GM12878 (cell line): ENCODE measurements at regions of chr3 and their contacts with region 1.

Region 1: DNA sequence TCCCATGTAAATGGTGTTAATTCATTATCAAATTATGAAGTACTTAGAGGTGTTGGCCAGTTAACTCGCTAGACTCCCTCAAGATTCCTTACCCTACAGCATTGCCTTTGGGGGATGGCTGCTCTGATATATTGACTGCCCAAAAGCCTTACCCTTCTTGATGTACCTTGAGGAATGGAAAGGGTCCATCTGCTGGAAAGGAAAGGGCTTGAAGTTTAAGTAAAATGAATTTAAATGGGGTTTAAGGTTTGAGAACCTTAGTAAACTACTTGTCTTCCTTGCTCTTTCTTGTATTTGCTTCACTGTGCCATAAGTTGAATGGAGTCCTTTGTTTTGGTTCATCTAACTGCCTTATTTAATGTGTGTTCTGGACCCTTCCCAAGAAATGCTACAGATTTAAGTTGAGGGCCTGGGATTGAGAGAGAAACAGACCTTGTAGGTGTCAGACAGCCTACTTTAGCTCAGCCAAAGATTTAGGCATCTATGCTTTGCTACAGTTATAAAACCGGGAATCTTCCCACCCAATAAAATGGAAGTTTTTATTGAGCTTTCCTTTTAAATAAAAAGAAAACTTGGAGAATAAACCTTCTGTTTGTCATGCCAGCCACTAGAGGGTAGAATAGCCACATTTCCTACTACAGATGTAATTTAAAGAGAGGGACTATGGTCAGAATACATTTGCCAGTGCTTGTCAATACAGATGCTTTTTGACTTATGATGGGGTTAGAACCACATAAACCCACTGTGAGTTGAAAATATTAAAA is 25.3 kb downstream of the CMSS1 start:
- DNase-seq: no peak
- ATAC-seq: peak; percentile 86
- H3K4me3 ChIP-seq: no peak overlapping the region
- H3K27ac ChIP-seq: no peak overlapping the region
- H3K4me1 ChIP-seq: peaks cover 11% of the 10 kb centered on the region; the same call in 1 of the 2 replicates
- H3K27me3 ChIP-seq: no peaks in the 10 kb centered on the region
- CTCF ChIP-seq: peak; percentile 46 to 65 (median 57); a peak in 5 of 6 replicates
- EP300 ChIP-seq: no peak
- POLR2A ChIP-seq: no peak
- RAD21 ChIP-seq: peak; percentile 89

Region 2: DNA sequence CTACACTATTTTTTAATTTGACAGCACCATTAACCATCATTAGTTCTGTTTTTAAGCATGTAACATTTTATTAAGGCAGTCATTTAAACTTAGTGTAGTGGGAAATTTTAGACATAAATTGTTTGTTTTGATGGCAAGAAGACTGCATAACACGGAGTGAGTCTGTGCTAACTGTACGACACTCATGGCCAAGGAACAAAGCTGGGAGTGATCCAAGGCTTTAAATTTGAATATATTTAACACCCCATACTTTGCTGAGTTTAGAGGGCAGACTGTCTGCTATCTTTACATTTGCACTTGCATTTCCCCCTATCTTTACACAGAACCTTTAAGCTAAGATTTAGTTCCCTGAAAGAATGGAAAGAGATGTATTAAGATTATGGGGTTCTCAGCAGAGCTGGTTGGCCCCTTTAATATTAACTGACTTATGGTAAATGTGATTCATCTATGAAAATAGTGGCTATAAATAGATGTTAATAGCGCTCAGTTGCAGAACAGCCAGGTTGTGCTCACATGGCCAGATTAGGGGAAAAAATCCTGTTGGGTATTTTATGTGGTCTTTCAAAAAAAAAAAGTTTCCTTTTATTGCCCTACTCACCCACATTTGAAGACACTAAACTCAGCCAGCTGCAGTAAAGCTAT is 95.4 kb after region 1 on chr3:
- CTCF ChIA-PET with region 1: no interaction called
- POLR2A ChIA-PET with region 1: no interaction called
- RAD21 ChIA-PET with region 1: interaction called, 14 read pairs
- SMC1A ChIA-PET with region 1: interaction called, 9 read pairs
- in situ Hi-C with region 1: no loop called
- intact Hi-C with region 1: loop called (anchors 5 kb)
- DNase-seq: no peak
- ATAC-seq: peak; percentile 56
- H3K4me3 ChIP-seq: 0 out of 2 replicates have a peak overlapping the region, but pooled peaks have one; percentile 15
- H3K27ac ChIP-seq: 0 out of 2 replicates have a peak overlapping the region, but pooled peaks have one; percentile 58
- H3K4me1 ChIP-seq: peaks cover 24% of the 10 kb centered on the region
- H3K27me3 ChIP-seq: no peaks in the 10 kb centered on the region
- CTCF ChIP-seq: no peak
- EP300 ChIP-seq: no peak
- POLR2A ChIP-seq: no peak
- RAD21 ChIP-seq: no peak

Region 3: DNA sequence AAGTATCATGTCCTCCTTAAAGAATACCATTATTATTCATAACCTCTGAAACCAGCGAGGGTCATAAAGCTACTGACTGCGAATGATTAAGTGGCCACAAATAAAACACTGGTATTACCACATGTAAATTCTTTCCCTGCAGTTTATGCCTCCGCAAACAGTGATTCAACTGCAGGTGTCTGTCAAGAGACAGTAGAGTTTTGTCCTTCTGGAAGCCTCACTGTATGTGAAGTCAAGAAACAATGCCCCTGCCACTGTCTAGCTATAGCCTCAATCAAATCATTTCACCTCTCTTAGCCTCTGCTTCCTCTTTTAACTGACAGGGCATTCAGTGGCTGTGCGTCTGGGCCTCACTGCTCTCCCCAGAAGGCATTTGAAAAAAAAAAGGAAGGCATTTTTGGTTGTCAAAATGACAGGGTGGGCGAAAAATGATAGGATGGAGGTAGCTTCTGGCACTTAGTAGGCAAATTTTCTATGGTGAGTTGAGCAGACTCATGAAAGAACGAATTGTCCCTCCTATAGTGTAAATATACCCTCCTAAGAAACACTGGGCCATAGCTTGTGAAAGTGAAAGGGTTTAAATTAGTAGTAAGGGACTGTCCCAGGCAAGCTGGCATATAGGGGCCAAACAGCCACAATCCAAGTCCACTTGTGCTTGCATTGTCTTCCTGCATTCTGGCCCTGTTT is 204.6 kb after region 1 on chr3:
- CTCF ChIA-PET with region 1: interaction called, 13 read pairs
- POLR2A ChIA-PET with region 1: no interaction called
- RAD21 ChIA-PET with region 1: interaction called, 5 read pairs
- SMC1A ChIA-PET with region 1: interaction called, 15 read pairs
- in situ Hi-C with region 1: no loop called
- intact Hi-C with region 1: loop called (anchors 5 kb)
- DNase-seq: peak; percentile 77
- ATAC-seq: peak; percentile 93
- H3K4me3 ChIP-seq: peak overlapping the region; percentile 53
- H3K27ac ChIP-seq: peak overlapping the region; percentile 21; the same call in 1 of the 2 replicates
- H3K4me1 ChIP-seq: peaks cover 43% of the 10 kb centered on the region
- H3K27me3 ChIP-seq: no peaks in the 10 kb centered on the region
- CTCF ChIP-seq: no peak
- EP300 ChIP-seq: peak; percentile 41 to 73
- POLR2A ChIP-seq: no peak
- RAD21 ChIP-seq: no peak

Region 4: DNA sequence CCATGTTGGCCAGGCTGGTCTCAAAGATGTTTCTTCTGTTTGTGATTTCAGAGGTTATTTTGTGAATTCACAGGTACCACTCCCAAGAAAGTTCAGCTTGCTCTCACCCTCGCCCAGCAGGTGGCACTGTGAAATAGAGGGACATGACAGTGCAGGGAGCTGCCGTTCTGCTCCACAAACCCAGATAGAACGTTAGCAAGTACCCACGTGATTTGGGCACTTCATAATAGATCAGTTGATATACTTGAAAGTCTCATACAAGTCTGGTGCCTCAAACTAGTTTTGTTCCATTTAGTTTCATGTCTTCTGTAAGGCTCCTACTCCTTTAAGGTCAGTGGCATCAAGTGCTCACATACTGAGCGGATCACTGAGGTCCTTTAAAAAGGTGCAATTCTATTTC is 225.8 kb after region 1 on chr3:
- CTCF ChIA-PET with region 1: interaction called, 42 read pairs
- POLR2A ChIA-PET with region 1: no interaction called
- RAD21 ChIA-PET with region 1: interaction called, 16 read pairs
- SMC1A ChIA-PET with region 1: interaction called, 11 read pairs
- in situ Hi-C with region 1: loop called (anchors 5 kb)
- intact Hi-C with region 1: loop called (anchors 5 kb)
- DNase-seq: peak; percentile 33
- ATAC-seq: peak; percentile 96
- H3K4me3 ChIP-seq: no peak overlapping the region
- H3K27ac ChIP-seq: no peak overlapping the region
- H3K4me1 ChIP-seq: peaks cover 16% of the 10 kb centered on the region
- H3K27me3 ChIP-seq: no peaks in the 10 kb centered on the region
- CTCF ChIP-seq: peak; percentile 74 to 79 (median 79)
- EP300 ChIP-seq: no peak
- POLR2A ChIP-seq: no peak
- RAD21 ChIP-seq: peak; percentile 92

Region 5: GRCh38 chr3:100089812-100090668 is 247.0 kb after region 1 on chr3:
- CTCF ChIA-PET with region 1: interaction called, 17 read pairs
- POLR2A ChIA-PET with region 1: no interaction called
- RAD21 ChIA-PET with region 1: interaction called, 12 read pairs
- SMC1A ChIA-PET with region 1: interaction called, 8 read pairs
- in situ Hi-C with region 1: no loop called
- intact Hi-C with region 1: no loop called
- DNase-seq: no peak
- ATAC-seq: peak; percentile 90
- H3K4me3 ChIP-seq: no peak overlapping the region
- H3K27ac ChIP-seq: no peak overlapping the region
- H3K4me1 ChIP-seq: peaks cover 18% of the 10 kb centered on the region
- H3K27me3 ChIP-seq: no peaks in the 10 kb centered on the region
- CTCF ChIP-seq: peak; percentile 32 to 73 (median 72)
- EP300 ChIP-seq: no peak
- POLR2A ChIP-seq: no peak
- RAD21 ChIP-seq: peak; percentile 67

Region 6: GRCh38 chr3:100254168-100254777 is 411.3 kb after region 1 on chr3:
- CTCF ChIA-PET with region 1: interaction called, 80 read pairs
- POLR2A ChIA-PET with region 1: no interaction called
- RAD21 ChIA-PET with region 1: interaction called, 62 read pairs
- SMC1A ChIA-PET with region 1: interaction called, 46 read pairs
- in situ Hi-C with region 1: loop called (anchors 5 kb)
- intact Hi-C with region 1: loop called (anchors 1 kb)
- DNase-seq: no peak
- ATAC-seq: peak; percentile 95
- H3K4me3 ChIP-seq: no peak overlapping the region
- H3K27ac ChIP-seq: no peak overlapping the region
- H3K4me1 ChIP-seq: no peaks in the 10 kb centered on the region
- H3K27me3 ChIP-seq: no peaks in the 10 kb centered on the region
- CTCF ChIP-seq: peak; percentile 75 to 83 (median 78)
- EP300 ChIP-seq: no peak
- POLR2A ChIP-seq: no peak
- RAD21 ChIP-seq: peak; percentile 99